Esophagus muscularis mucosa (tissue), 4 donors: ENCODE measurements at regions of chr5 and their contacts with region 1.

Region 1: GRCh38 chr5:122156724-122157325 is 27.5 kb downstream of the ZNF474 start:
- DNase-seq: no peak
- H3K4me3 ChIP-seq: no peak overlapping the region
- H3K27ac ChIP-seq: no peak overlapping the region
- H3K4me1 ChIP-seq: peaks cover 3 to 40% (median 32%) of the 10 kb centered on the region in 4 donors
- H3K27me3 ChIP-seq: no peaks in the 10 kb centered on the region
- CTCF ChIP-seq: peak; percentile 48 to 52 (median 52)
- EP300 ChIP-seq: no peak
- POLR2A ChIP-seq: no peak

Region 2: DNA sequence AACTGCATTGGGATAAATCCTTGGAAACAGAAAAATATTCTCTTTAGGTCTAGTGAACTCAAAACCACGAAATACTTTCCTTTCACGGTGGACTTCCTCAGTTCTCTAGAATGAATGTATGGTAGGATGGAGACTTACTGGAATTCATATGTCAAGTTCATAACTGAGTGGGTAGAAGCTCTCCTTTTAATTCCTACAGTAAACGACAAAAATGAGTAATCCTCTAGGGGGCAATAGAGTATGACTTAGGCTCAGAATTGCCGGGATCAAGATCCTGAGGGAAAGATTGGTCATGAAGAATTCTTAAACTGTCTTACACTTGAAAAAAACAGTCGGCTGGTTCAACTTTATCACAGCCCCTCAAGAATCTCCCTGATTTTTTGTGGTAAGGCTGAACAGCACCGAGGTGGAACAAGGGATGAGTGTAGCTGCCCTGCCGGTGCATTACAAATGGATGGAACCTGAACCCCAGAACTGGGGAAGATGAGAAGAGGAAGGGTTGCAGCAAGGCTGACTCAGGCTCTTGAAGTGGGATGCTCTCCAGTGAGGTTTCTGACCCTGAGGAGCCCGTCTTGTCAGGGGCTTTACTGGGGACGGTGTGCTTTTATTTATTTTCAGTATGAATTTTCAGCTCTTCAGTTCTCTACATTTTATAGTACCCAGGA is 64.8 kb before region 1 on chr5:
- intact Hi-C with region 1: loop called (anchors 2 kb)
- DNase-seq: no peak
- H3K4me3 ChIP-seq: no peak overlapping the region
- H3K27ac ChIP-seq: no peak overlapping the region
- H3K4me1 ChIP-seq: peaks cover 0 to 28% (median 7%) of the 10 kb centered on the region in 4 donors
- H3K27me3 ChIP-seq: no peaks in the 10 kb centered on the region
- CTCF ChIP-seq: peak; percentile 45 to 60 (median 52)
- EP300 ChIP-seq: no peak
- POLR2A ChIP-seq: no peak